ENCODE measurements at regions of chr1 and their contacts with region 1.

Region 1: DNA sequence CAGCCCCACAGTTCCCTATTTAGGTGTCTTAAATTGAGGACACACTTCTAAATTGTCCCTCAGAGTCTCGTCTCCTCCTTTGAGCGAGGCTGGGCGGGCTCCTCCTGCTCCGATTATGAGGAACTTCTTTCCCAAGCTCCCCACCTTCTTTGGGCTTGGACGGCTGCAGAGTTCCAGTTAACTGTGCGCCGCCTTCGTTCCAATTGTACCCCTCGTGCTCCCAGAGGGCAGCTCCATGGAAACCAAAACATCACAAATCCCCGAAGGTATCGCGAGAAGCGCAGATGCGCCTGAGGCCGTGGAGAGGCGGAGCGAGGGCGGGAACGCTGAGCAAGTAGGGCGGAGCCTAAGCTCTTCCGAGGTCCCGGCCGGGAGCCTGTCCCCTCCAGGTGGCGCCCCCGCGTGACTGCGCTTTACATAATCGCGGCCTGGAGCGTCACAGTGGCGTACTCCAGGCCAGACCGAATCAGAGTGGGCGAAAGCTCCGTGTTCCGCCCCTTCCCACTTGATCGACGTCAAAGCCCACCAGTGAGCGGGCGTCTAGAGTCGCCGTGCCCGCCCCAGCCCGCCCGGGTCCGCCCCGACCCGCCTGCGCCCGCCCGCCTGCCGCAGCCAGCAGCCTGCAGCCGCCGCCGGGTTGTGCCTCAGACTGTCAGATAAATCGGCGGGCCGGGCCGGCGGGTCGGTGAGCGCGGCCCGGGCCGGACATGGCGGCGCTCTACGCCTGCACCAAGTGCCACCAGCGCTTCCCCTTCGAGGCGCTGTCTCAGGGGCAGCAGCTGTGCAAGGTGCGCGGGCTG is at the start of gene FAM76A:
- DNase-seq: peak; percentile 98 to 100 (median 99)
- ATAC-seq: peak; percentile 91 to 97 (median 94)
- H3K4me3 ChIP-seq: peak within 1 kb of the TSS; percentile 72 to 81
- H3K4me3 Mint-ChIP-seq: peak within 1 kb of the TSS; percentile 84 to 87 (median 87)
- H3K27ac ChIP-seq: peak within 1 kb of the TSS; percentile 85
- H3K27ac Mint-ChIP-seq: peak within 1 kb of the TSS; percentile 95 to 96
- H3K4me1 ChIP-seq: peaks cover 4 to 17% of the 10 kb centered on the region in 2 experiments
- H3K4me1 Mint-ChIP-seq: peaks cover 23 to 28% (median 26%) of the 10 kb centered on the region in 3 donors
- H3K27me3 ChIP-seq: no peaks in the 10 kb centered on the region
- H3K27me3 Mint-ChIP-seq: no peaks in the 10 kb centered on the region
- total RNA-seq, gene FAM76A: 18.1 to 23.4 (median 21.2) TPM

Region 2: DNA sequence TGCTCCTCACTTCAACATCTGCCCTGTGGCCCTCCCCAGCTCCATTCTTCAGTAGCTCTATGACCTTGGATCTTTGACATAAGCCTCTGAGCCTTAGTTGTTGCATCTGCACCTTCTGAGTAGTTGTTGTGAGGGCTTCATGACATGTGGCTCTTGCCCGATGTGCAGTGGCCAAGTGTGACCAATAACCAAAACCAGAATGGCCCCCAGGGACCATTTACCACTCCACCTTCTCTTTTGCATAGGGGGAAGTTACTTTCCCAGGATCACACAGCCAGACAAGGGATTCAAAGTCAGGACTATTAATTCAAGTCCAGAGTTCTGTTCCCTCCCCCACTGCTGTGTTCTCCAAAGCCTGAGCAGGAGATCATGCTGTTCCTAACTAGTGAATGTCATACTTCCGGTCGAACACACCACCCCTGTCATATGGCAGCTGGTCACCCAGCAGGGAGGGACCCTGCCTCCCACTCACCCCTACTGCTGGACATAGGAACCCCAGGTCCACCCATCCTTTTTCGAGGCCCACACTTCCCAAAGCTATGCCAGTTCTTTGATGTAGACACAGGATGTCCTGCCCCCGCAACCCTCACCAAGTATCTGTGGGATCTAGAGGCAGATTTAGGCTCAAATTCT is 94.6 kb before region 1 on chr1:
- CTCF ChIA-PET with region 1: no interaction called
- POLR2A ChIA-PET with region 1: interaction called in 1 of 2 experiments, 10 read pairs
- DNase-seq: no peak
- ATAC-seq: no peak
- H3K4me3 ChIP-seq: no peak overlapping the region
- H3K4me3 Mint-ChIP-seq: peak overlapping the region in 1 of 3 donors; percentile 76
- H3K27ac ChIP-seq: peak overlapping the region; percentile 35
- H3K27ac Mint-ChIP-seq: peak overlapping the region; percentile 75 to 77
- H3K4me1 ChIP-seq: peaks cover 34 to 87% of the 10 kb centered on the region in 2 experiments
- H3K4me1 Mint-ChIP-seq: peaks cover 63 to 69% (median 64%) of the 10 kb centered on the region in 3 donors
- H3K27me3 ChIP-seq: no peaks in the 10 kb centered on the region
- H3K27me3 Mint-ChIP-seq: no peaks in the 10 kb centered on the region

Region 3: DNA sequence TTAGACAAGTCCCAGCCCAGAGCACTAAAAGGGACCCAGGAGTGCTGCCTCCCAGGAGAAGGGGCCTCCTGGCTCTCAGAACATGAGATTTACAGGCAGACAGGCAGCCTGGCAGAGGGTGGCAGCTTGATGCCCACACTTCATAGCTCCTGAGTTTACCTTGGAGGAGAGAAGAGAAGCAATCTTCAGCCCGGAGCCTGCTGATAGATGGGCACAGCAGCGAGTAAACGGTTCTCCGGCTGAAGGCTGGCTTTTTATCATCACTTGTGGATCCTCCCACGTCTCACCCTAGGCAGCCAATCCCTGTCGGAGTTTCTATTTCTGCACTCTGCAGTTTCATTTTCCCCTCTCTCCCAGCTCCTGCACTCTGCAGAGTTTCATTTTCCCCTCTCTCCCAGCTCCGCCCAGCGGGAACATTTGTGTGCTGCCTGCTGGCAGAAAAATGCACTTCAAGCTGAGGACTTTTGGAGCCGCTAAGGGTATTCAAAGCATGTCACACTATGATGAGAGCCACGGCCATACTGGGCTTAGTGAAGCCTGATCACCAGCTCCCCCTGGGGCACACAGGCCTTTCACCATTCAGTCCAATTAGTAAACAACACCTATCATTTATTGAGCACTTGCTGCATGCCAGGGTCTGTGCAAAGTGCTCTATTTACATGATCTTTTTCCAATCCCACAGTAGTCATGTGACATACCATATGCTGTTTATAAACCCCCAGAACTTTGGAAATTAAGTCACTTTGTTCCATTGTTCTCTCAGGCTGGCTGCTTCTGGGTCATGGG is 53.4 kb before region 1 on chr1 and contains the start of gene IFI6:
- CTCF ChIA-PET with region 1: interaction called, 3 to 15 read pairs
- POLR2A ChIA-PET with region 1: interaction called in 1 of 2 experiments, 11 read pairs
- DNase-seq: peak; percentile 54 to 90 (median 71)
- ATAC-seq: peak; percentile 91 to 95 (median 93)
- H3K4me3 ChIP-seq: peak within 1 kb of the TSS; percentile 58 to 71
- H3K4me3 Mint-ChIP-seq: peak within 1 kb of the TSS; percentile 89 to 97 (median 95)
- H3K27ac ChIP-seq: peak within 1 kb of the TSS; percentile 91
- H3K27ac Mint-ChIP-seq: peak within 1 kb of the TSS; percentile 98 to 99
- H3K4me1 ChIP-seq: peaks cover 12 to 42% of the 10 kb centered on the region in 2 experiments
- H3K4me1 Mint-ChIP-seq: peaks cover 32 to 46% (median 43%) of the 10 kb centered on the region in 3 donors
- H3K27me3 ChIP-seq: no peaks in the 10 kb centered on the region
- H3K27me3 Mint-ChIP-seq: no peaks in the 10 kb centered on the region
- total RNA-seq, gene IFI6: 28.2 to 52.1 (median 40.7) TPM

Region 4: DNA sequence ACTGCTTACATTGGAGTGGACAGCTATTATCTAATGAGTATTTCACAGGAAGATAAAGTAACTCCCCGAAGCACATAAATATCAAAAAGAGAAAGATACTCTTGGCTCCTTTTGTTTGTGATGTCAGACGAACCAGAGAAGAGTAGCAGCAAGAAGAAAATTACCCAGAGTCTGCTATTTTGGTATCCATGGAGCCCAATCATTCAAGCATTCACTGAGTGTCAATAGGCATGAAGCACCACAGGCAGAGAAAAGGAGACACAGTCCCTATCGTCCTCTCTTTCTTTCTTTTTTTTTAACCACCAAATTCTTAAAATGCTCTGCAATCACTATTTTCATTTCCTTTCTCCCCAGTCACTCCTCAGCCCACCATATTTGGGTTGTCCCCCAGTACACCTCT is 168.9 kb after region 1 on chr1:
- CTCF ChIA-PET with region 1: no interaction called
- POLR2A ChIA-PET with region 1: no interaction called
- DNase-seq: no peak
- ATAC-seq: no peak
- H3K4me3 ChIP-seq: no peak overlapping the region
- H3K4me3 Mint-ChIP-seq: no peak overlapping the region
- H3K27ac ChIP-seq: peak overlapping the region; percentile 26
- H3K27ac Mint-ChIP-seq: peak overlapping the region in 1 of 2 donors; percentile 81
- H3K4me1 ChIP-seq: peaks cover 23 to 27% of the 10 kb centered on the region in 2 experiments
- H3K4me1 Mint-ChIP-seq: peaks cover 7 to 43% (median 39%) of the 10 kb centered on the region in 3 donors
- H3K27me3 ChIP-seq: no peaks in the 10 kb centered on the region
- H3K27me3 Mint-ChIP-seq: no peaks in the 10 kb centered on the region

Measured in T-cell (primary cell).